ENCODE measurements at regions of chr20 and their contacts with region 1.

Region 1: GRCh38 chr20:815914-816606 is 17.5 kb upstream of the FAM110A start:
- DNase-seq: peak in 4 of 5 donors; percentile 33 to 65 (median 44)
- ATAC-seq: peak in 3 of 4 donors; percentile 48 to 59 (median 48)
- H3K4me3 ChIP-seq: no peak overlapping the region
- H3K27ac ChIP-seq: no peak overlapping the region
- H3K4me1 ChIP-seq: peaks cover 0 to 6% (median 0%) of the 10 kb centered on the region in 12 donors
- H3K27me3 ChIP-seq: peaks cover 0 to 23% (median 0%) of the 10 kb centered on the region in 9 donors
- CTCF ChIP-seq: peak; percentile 94 to 99 (median 97)
- POLR2A ChIP-seq: no peak

Region 2: GRCh38 chr20:956330-956951 is 140.4 kb after region 1 on chr20:
- intact Hi-C with region 1: loop called (anchors 1 to 2 kb)
- DNase-seq: peak; percentile 52 to 83 (median 55)
- ATAC-seq: peak in 3 of 4 donors; percentile 83 to 87 (median 84)
- H3K4me3 ChIP-seq: no peak overlapping the region
- H3K27ac ChIP-seq: no peak overlapping the region
- H3K4me1 ChIP-seq: peaks cover 0 to 2% (median 0%) of the 10 kb centered on the region in 12 donors
- H3K27me3 ChIP-seq: peaks cover 4 to 68% (median 28%) of the 10 kb centered on the region in 9 donors
- CTCF ChIP-seq: peak; percentile 87 to 99 (median 96)
- POLR2A ChIP-seq: no peak

Region 3: GRCh38 chr20:1108437-1108920 is 292.4 kb after region 1 on chr20:
- intact Hi-C with region 1: loop called in 6 of 10 experiments (anchors 5 to 10 kb)
- DNase-seq: peak; percentile 27 to 70 (median 42)
- ATAC-seq: peak in 3 of 4 donors; percentile 75 to 80 (median 76)
- H3K4me3 ChIP-seq: no peak overlapping the region
- H3K27ac ChIP-seq: no peak overlapping the region
- H3K4me1 ChIP-seq: peaks cover 0 to 4% (median 0%) of the 10 kb centered on the region in 12 donors
- H3K27me3 ChIP-seq: no peaks in the 10 kb centered on the region
- CTCF ChIP-seq: peak; percentile 61 to 83 (median 73)
- POLR2A ChIP-seq: no peak

Region 4: DNA sequence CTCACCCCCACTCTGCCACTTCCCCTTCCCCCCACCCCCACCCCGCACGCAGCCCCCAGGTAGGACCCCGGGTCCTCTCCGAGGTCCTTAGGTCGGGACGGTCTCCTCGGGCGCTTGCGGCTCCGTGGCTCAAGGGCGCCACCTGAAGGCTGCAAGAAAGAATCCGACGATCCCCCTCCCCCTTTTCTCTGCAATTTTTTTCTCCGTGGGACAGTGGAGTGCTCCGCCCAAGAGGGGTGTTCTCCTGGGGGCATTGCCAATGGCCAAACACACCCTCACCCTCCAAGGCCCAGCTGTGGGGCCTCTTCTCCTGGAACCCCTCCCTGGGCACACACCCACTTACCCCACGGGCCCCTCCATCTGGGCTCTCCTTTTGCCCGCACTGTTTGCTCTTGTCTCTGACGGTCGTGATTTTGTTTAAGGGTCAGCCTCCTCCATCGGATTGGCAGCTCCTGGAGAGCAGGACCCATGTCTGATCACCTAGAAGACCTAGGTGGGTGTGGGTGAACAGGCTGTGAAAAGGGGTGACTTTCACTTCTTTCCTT is 369.8 kb after region 1 on chr20:
- intact Hi-C with region 1: loop called in 3 of 10 experiments (anchors 10 kb)
- DNase-seq: peak in 4 of 5 donors; percentile 38 to 55 (median 43)
- ATAC-seq: peak in 3 of 4 donors; percentile 54 to 72 (median 61)
- H3K4me3 ChIP-seq: peak overlapping the region; percentile 42 to 69 (median 58)
- H3K27ac ChIP-seq: peak overlapping the region in 5 of 12 donors; percentile 46 to 66 (median 47)
- H3K4me1 ChIP-seq: peaks cover 0 to 35% (median 8%) of the 10 kb centered on the region in 12 donors
- H3K27me3 ChIP-seq: peaks cover 0 to 38% (median 9%) of the 10 kb centered on the region in 9 donors
- CTCF ChIP-seq: peak; percentile 32 to 64 (median 46)
- POLR2A ChIP-seq: no peak

Measured in heart left ventricle (tissue), 16 donors.